ENCODE measurements at regions of chr1 and their contacts with region 1.

Region 1: GRCh38 chr1:156270314-156270713 is 12.3 kb downstream of the SMG5 start:
- DNase-seq: no peak
- ATAC-seq: no peak
- H3K4me3 ChIP-seq: no peak overlapping the region
- H3K27ac ChIP-seq: no peak overlapping the region
- H3K4me1 ChIP-seq: no peaks in the 10 kb centered on the region
- H3K27me3 ChIP-seq: no peaks in the 10 kb centered on the region
- CTCF ChIP-seq: no peak
- EP300 ChIP-seq: no peak
- POLR2A ChIP-seq: no peak
- RAD21 ChIP-seq: no peak

Region 2: GRCh38 chr1:156054500-156055280 is 215.6 kb before region 1 on chr1 and contains the start of gene LAMTOR2:
- CTCF ChIA-PET with region 1: no interaction called
- POLR2A ChIA-PET with region 1: no interaction called
- in situ Hi-C with region 1: no loop called
- intact Hi-C with region 1: no loop called
- DNase-seq: peak; percentile 97
- ATAC-seq: peak; percentile 88
- H3K4me3 ChIP-seq: peak within 1 kb of the TSS; percentile 94 to 97 (median 96)
- H3K27ac ChIP-seq: peak within 1 kb of the TSS; percentile 100
- H3K4me1 ChIP-seq: peaks cover 27% of the 10 kb centered on the region
- H3K27me3 ChIP-seq: no peaks in the 10 kb centered on the region; a peak in 1 of 5 replicates
- CTCF ChIP-seq: peak; percentile 19
- EP300 ChIP-seq: peak in 1 of 2 experiments; percentile 36; a peak in 1 of 4 replicates
- POLR2A ChIP-seq: peak; percentile 50 to 89; a peak in 3 of 4 replicates
- RAD21 ChIP-seq: peak; percentile 59
- total RNA-seq, gene LAMTOR2: 66.4 and 84.0 TPM in 2 replicates

Region 3: DNA sequence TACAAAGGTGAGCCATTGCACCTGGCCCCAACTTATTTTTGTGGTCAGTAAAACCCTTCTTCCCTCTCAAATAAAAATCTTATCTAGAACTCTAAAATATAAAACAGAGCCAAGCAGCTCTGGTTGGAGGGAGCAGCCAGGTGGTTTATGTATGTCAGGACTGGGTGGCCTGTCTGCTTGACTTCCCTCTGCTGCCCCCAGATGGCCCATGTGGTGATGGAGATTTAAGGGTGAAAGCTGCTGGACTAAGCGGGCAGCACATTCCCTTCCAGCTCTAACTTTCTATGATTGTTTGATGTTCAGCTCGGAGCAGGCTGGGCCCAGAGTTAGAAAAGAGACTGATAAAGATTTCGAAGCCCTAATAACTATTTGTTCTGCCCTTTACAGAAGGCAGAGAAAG is 10.5 kb before region 1 on chr1:
- CTCF ChIA-PET with region 1: no interaction called
- POLR2A ChIA-PET with region 1: no interaction called
- in situ Hi-C with region 1: no loop called
- intact Hi-C with region 1: no loop called
- DNase-seq: no peak
- ATAC-seq: peak; percentile 71
- H3K4me3 ChIP-seq: no peak overlapping the region
- H3K27ac ChIP-seq: no peak overlapping the region
- H3K4me1 ChIP-seq: no peaks in the 10 kb centered on the region; the same call in 1 of the 2 replicates
- H3K27me3 ChIP-seq: no peaks in the 10 kb centered on the region; a peak in 1 of 5 replicates
- CTCF ChIP-seq: peak; percentile 40; the same call in 1 of the 2 replicates
- EP300 ChIP-seq: no peak
- POLR2A ChIP-seq: no peak
- RAD21 ChIP-seq: no peak

Region 4: GRCh38 chr1:156282479-156283222 is 12.3 kb after region 1 on chr1 and contains the start of gene SMG5:
- CTCF ChIA-PET with region 1: no interaction called
- POLR2A ChIA-PET with region 1: interaction called, 18 read pairs
- in situ Hi-C with region 1: no loop called
- intact Hi-C with region 1: no loop called
- DNase-seq: peak; percentile 97
- ATAC-seq: peak; percentile 93
- H3K4me3 ChIP-seq: peak within 1 kb of the TSS; percentile 71 to 95 (median 87)
- H3K27ac ChIP-seq: peak within 1 kb of the TSS; percentile 78
- H3K4me1 ChIP-seq: peaks cover 33% of the 10 kb centered on the region
- H3K27me3 ChIP-seq: no peaks in the 10 kb centered on the region; a peak in 1 of 5 replicates
- CTCF ChIP-seq: no peak
- EP300 ChIP-seq: peak in 1 of 2 experiments; percentile 59; a peak in 1 of 4 replicates
- POLR2A ChIP-seq: peak; percentile 90 to 91
- RAD21 ChIP-seq: 0 out of 2 replicates have a peak, but pooled peaks have one; percentile 10
- total RNA-seq, gene SMG5: 63.3 and 84.0 TPM in 2 replicates